RWPE1 (cell line): ENCODE measurements at regions of chr1 and their contacts with region 1.

Region 1: GRCh38 chr1:159798893-159799292 is 3.3 kb upstream of the FCRL6 start:
- DNase-seq: peak; percentile 69
- H3K27ac ChIP-seq: no peak overlapping the region
- CTCF ChIP-seq: peak; percentile 71

Region 2: DNA sequence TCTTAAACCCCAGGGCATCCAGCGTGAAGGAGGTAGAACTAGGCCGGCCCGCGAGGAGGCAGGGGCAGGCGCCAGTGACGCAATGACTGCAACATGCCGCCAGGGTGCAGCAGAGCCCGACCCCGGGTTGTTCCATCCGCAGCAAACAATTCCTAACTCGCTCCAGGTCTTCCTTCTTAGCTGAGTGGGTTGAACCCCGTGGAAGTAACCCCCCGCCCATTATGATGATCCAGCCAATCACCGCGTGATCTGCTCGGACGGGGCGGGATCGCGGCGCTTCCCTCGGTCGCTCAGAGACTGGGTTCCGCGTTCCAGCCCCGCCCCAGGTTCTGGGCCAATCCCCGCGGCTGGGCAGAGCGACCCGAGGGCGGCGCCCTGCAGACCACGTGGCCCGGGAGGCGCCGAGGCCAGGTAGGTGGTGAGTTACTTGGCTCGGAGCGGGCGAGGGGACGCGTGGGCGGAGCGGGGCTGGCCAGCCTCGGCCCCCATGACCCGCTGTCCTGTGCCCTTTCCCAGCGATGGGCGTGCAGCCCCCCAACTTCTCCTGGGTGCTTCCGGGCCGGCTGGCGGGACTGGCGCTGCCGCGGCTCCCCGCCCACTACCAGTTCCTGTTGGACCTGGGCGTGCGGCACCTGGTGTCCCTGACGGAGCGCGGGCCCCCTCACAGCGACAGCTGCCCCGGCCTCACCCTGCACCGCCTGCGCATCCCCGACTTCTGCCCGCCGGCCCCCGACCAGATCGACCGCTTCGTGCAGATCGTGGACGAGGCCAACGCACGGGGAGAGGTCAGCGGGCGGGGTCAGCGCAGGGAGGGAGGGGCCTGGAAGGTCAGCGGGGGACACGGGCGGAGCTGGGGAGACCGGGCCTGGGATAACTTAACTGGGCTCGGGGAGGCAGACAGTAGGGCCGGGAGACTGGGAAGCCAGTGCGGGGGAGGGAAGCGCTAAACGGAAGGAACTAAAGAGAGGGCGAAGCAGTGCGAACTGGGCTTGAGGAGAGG is 18.0 kb before region 1 on chr1 and contains the start of gene DUSP23:
- CTCF ChIA-PET with region 1: interaction called, 11 read pairs
- POLR2A ChIA-PET with region 1: no interaction called
- DNase-seq: peak; percentile 99
- H3K27ac ChIP-seq: peak within 1 kb of the TSS; percentile 81
- CTCF ChIP-seq: peak; percentile 95

Region 3: DNA sequence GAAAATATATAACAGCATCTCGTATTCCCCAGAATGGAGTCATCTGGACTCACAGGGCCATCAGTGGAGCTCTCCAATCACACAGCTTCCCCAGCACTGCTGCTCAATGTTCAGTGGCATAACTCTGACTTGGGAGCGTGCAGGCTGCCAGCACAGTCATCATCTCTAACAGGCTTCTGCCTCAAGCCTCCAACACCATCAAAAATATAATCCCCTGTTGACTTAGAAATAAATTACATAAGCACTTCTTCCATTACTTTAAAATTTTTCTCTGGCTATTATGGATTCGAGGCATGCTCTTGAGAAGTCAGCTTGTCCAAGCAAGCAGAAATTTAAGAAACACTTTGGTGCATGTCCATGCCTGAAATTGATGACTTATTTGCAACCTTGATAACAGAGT is 11.9 kb before region 1 on chr1:
- CTCF ChIA-PET with region 1: interaction called, 10 read pairs
- POLR2A ChIA-PET with region 1: no interaction called
- DNase-seq: no peak
- H3K27ac ChIP-seq: peak overlapping the region; percentile 80
- CTCF ChIP-seq: no peak

Region 4: DNA sequence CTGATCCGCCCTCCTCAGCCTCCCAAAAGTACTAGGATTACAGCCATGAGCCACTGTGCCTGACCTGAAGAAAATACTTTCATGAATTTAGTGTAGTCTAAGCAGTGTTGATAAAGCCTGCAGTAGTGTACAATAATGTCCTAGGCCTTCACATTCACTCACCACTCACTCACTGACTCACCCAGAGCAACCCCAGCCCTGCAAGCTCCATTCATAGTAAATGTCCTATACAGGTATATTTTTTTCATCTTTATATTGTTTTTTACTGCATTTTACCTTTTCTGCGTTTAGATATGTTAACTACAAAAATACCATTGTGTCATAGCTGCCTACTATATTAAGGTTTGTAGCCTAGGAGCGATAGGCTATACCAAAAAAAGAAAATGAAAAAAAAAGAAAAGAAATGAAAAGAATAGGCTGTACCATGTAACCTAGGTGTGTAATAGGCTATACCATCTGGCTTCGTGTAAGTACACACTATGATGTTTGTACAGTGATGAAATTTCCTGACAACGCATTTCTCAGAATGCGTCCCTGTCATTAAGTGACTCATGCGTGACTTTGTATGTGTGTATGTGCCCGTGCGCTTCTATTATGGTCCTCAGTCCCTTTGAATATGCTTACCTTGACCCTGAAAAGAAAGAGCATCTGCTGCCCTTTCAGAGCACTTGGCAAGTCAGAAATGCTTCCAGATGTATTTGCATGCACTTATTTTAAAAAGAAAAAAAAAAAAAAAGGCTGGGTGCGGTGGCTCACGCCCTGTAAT is 18.6 kb after region 1 on chr1:
- CTCF ChIA-PET with region 1: interaction called, 17 read pairs
- POLR2A ChIA-PET with region 1: no interaction called
- DNase-seq: peak; percentile 5
- H3K27ac ChIP-seq: 0 out of 2 replicates have a peak overlapping the region, but pooled peaks have one; percentile 30
- CTCF ChIP-seq: no peak

Region 5: GRCh38 chr1:159891275-159892157 is 92.6 kb after region 1 on chr1:
- CTCF ChIA-PET with region 1: interaction called, 109 read pairs
- POLR2A ChIA-PET with region 1: no interaction called
- DNase-seq: peak; percentile 80
- H3K27ac ChIP-seq: peak overlapping the region; percentile 90
- CTCF ChIP-seq: peak; percentile 98